ENCODE measurements at regions of chr1 and their contacts with region 1.

Region 1: GRCh38 chr1:8026153-8026975 is at the start of gene ERRFI1:
- DNase-seq: peak; percentile 92

Region 2: GRCh38 chr1:8015036-8015808 is 11.1 kb before region 1 on chr1:
- CTCF ChIA-PET with region 1: interaction called, 8 read pairs
- POLR2A ChIA-PET with region 1: interaction called, 10 read pairs
- DNase-seq: peak; percentile 50

Measured in HEK293T (cell line).